Heart left ventricle (tissue), 16 donors: ENCODE measurements at regions of chr5 and their contacts with region 1.

Region 1: GRCh38 chr5:39376293-39376714 is 12.0 kb upstream of the C9 start:
- DNase-seq: no peak
- ATAC-seq: peak in 3 of 4 donors; percentile 49 to 79 (median 58)
- H3K4me3 ChIP-seq: no peak overlapping the region
- H3K27ac ChIP-seq: no peak overlapping the region
- H3K4me1 ChIP-seq: peaks cover 0 to 9% (median 0%) of the 10 kb centered on the region in 12 donors
- H3K27me3 ChIP-seq: no peaks in the 10 kb centered on the region
- CTCF ChIP-seq: peak; percentile 60 to 87 (median 73)
- POLR2A ChIP-seq: no peak

Region 2: GRCh38 chr5:39570403-39571027 is 194.2 kb after region 1 on chr5:
- intact Hi-C with region 1: loop called in 6 of 10 experiments (anchors 2 to 5 kb)
- DNase-seq: no peak
- ATAC-seq: no peak
- H3K4me3 ChIP-seq: no peak overlapping the region
- H3K27ac ChIP-seq: no peak overlapping the region
- H3K4me1 ChIP-seq: peaks cover 0 to 8% (median 0%) of the 10 kb centered on the region in 12 donors
- H3K27me3 ChIP-seq: peaks cover 0 to 8% (median 0%) of the 10 kb centered on the region in 9 donors
- CTCF ChIP-seq: peak; percentile 46 to 80 (median 67)
- POLR2A ChIP-seq: no peak